Activated T-helper 2 cell treated with anti-CD3 and anti-CD28 coated beads, Interferon-gamma antibody, Interleukin-2, Interleukin-4, amounts not matched to agents 10 μg/mL and 5 μg/mL and 100 μg/mL, durations not matched to agents 14 hours and 24 hours and 36 hours (primary cell): ENCODE measurements at regions of chr3 and their contacts with region 1.

Region 1: GRCh38 chr3:32781210-32781968 is 36.4 kb upstream of the TRIM71 start:
- DNase-seq: peak; percentile 60
- H3K4me3 Mint-ChIP-seq: peak overlapping the region; percentile 83
- H3K27ac Mint-ChIP-seq: peak overlapping the region; percentile 18
- H3K4me1 Mint-ChIP-seq: peaks cover 3% of the 10 kb centered on the region
- H3K27me3 Mint-ChIP-seq: peaks cover 10% of the 10 kb centered on the region

Region 2: DNA sequence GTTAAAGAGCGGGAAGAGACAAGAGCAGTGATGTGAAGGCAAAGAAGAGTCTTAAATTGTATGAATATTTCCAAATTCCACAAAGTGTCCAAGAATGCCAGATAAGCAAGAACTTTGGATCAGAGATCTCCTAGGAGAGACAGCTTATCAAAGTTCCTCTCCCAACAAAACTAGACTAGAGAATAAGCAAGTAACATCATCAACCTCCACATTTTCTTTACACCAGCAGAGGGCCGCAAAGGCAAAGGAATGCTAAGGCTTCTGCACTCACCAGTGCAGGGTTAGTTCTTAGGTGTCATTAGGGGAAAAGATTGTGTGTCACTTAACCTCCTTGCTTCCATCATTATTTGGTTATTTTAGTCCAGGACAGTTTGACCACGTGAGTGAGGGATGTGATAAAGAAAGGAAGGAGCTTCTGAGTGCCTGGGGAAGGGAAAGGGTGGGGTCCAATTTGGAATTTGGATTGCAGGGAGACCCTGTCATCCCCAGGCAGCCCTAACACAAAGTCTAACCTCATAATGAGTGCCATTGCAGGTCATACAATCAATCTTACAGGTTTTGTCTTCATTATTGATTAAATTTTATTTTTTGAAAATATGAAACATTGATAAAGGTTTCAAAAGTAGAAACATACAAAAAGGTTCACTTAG is 271.2 kb before region 1 on chr3:
- intact Hi-C with region 1: loop called (anchors 2 kb)
- DNase-seq: peak; percentile 51
- H3K4me3 Mint-ChIP-seq: no peak overlapping the region
- H3K27ac Mint-ChIP-seq: no peak overlapping the region
- H3K4me1 Mint-ChIP-seq: no peaks in the 10 kb centered on the region
- H3K27me3 Mint-ChIP-seq: peaks cover 4% of the 10 kb centered on the region

Region 3: GRCh38 chr3:32709346-32709745 is 72.0 kb before region 1 on chr3:
- intact Hi-C with region 1: no loop called
- DNase-seq: no peak
- H3K4me3 Mint-ChIP-seq: no peak overlapping the region
- H3K27ac Mint-ChIP-seq: no peak overlapping the region
- H3K4me1 Mint-ChIP-seq: peaks cover 24% of the 10 kb centered on the region
- H3K27me3 Mint-ChIP-seq: no peaks in the 10 kb centered on the region

Region 4: GRCh38 chr3:32733631-32734229 is 47.7 kb before region 1 on chr3:
- intact Hi-C with region 1: loop called (anchors 5 kb)
- DNase-seq: no peak
- H3K4me3 Mint-ChIP-seq: no peak overlapping the region
- H3K27ac Mint-ChIP-seq: no peak overlapping the region
- H3K4me1 Mint-ChIP-seq: peaks cover 2% of the 10 kb centered on the region
- H3K27me3 Mint-ChIP-seq: no peaks in the 10 kb centered on the region

Region 5: GRCh38 chr3:32816439-32817256 is 35.3 kb after region 1 on chr3:
- intact Hi-C with region 1: loop called (anchors 2 kb)
- DNase-seq: peak; percentile 18
- H3K4me3 Mint-ChIP-seq: peak overlapping the region; percentile 70
- H3K27ac Mint-ChIP-seq: no peak overlapping the region
- H3K4me1 Mint-ChIP-seq: peaks cover 22% of the 10 kb centered on the region
- H3K27me3 Mint-ChIP-seq: peaks cover 66% of the 10 kb centered on the region